Right lobe of liver (tissue), 6 donors: ENCODE measurements at regions of chr5 and their contacts with region 1.

Region 1: GRCh38 chr5:88680253-88681132 is 202.5 kb downstream of the MEF2C start:
- DNase-seq: peak; percentile 78 to 82 (median 82)
- ATAC-seq: peak; percentile 98 to 99 (median 98)
- H3K4me3 ChIP-seq: peak overlapping the region; percentile 28 to 42 (median 36)
- H3K27ac ChIP-seq: no peak overlapping the region
- H3K4me1 ChIP-seq: peaks cover 0 to 13% (median 0%) of the 10 kb centered on the region in 4 donors
- H3K27me3 ChIP-seq: peaks cover 22 to 50% of the 10 kb centered on the region in 2 donors
- CTCF ChIP-seq: peak; percentile 92 to 100 (median 97)
- POLR2A ChIP-seq: no peak

Region 2: DNA sequence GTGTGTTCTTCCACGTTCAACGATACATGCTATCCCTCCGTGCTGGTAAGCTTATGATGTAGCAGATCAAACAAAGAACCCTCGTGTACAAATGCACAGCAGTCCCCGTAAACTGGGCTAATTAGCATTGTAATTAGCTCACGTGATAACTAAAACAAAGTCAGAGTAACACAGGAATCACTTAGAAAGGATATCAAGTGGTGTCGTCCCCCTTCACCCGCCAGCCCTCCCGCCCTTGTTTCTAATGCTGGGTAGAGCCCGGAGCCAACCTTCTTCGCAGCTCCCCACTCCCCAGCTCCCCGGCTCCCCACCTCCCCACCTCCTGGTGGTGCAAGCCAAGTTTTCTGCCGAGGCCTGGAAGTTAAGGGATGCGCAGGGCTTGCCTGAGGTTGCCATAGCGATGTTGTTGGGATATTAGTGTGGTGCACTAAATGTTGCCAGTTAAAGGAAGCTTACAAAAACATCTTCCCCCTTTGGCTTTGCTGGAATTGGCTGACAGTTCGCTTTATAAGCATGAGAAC is 909.8 kb before region 1 on chr5:
- intact Hi-C with region 1: loop called in 1 of 2 experiments (anchors 10 kb)
- DNase-seq: no peak
- ATAC-seq: no peak
- H3K4me3 ChIP-seq: no peak overlapping the region
- H3K27ac ChIP-seq: no peak overlapping the region
- H3K4me1 ChIP-seq: no peaks in the 10 kb centered on the region
- H3K27me3 ChIP-seq: no peaks in the 10 kb centered on the region
- CTCF ChIP-seq: no peak
- POLR2A ChIP-seq: no peak

Region 3: DNA sequence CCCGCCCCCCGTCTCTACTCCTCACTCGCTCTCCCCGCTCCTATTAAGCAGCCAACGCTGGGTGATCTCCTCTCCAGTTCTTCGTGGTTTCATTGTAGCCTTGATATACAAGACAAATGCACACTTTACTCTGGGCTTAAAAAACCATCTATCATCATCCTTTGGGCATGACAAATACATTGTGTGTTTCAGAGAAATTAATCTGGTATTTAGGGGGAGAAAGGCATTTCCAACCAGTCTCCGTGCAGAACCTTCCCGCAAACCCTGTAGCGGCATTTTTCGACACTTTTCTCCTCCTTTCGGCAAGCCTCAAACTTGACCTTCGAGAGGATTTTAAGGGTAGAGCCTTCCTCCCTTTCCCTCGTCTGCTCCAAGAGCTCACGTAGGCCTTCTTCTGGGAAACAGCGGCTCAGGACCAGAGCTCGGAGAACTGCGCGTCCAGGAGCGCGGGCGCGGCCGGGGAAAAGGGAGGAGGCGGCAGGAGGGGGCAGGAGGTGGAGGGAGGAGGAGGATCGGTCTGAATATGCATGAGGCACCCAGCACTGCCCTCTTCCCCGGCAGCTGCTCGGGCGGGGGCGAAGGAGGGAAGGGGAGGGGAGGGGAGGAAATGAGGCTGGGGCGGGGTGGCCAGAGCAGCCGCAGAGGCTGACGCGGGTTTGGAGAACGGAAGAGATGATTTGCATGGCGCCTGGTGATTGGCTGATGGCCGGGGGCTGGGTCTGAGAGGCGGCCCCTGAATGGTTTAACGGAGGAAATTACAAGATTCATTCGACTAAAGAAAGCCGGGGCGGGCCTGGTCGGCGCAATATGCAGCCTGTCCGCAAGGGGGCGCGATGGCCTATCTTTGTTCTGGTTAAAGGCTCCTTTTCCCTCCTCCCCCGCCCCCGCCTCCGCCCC is 539.4 kb before region 1 on chr5:
- intact Hi-C with region 1: loop called in 1 of 2 experiments (anchors 10 kb)
- DNase-seq: peak; percentile 96 to 98 (median 97)
- ATAC-seq: peak; percentile 95 to 98 (median 96)
- H3K4me3 ChIP-seq: peak overlapping the region; percentile 47 to 62 (median 59)
- H3K27ac ChIP-seq: peak overlapping the region in 2 of 3 donors; percentile 30 to 32
- H3K4me1 ChIP-seq: peaks cover 0 to 25% (median 2%) of the 10 kb centered on the region in 4 donors
- H3K27me3 ChIP-seq: no peaks in the 10 kb centered on the region
- CTCF ChIP-seq: peak; percentile 67 to 74 (median 68)
- POLR2A ChIP-seq: no peak

Region 4: GRCh38 chr5:88518131-88519016 is 162.1 kb before region 1 on chr5:
- intact Hi-C with region 1: no loop called
- DNase-seq: no peak
- ATAC-seq: no peak
- H3K4me3 ChIP-seq: no peak overlapping the region
- H3K27ac ChIP-seq: no peak overlapping the region
- H3K4me1 ChIP-seq: no peaks in the 10 kb centered on the region
- H3K27me3 ChIP-seq: no peaks in the 10 kb centered on the region
- CTCF ChIP-seq: no peak
- POLR2A ChIP-seq: no peak